GM10248 (cell line): ENCODE measurements at regions of chr3 and their contacts with region 1.

Region 1: DNA sequence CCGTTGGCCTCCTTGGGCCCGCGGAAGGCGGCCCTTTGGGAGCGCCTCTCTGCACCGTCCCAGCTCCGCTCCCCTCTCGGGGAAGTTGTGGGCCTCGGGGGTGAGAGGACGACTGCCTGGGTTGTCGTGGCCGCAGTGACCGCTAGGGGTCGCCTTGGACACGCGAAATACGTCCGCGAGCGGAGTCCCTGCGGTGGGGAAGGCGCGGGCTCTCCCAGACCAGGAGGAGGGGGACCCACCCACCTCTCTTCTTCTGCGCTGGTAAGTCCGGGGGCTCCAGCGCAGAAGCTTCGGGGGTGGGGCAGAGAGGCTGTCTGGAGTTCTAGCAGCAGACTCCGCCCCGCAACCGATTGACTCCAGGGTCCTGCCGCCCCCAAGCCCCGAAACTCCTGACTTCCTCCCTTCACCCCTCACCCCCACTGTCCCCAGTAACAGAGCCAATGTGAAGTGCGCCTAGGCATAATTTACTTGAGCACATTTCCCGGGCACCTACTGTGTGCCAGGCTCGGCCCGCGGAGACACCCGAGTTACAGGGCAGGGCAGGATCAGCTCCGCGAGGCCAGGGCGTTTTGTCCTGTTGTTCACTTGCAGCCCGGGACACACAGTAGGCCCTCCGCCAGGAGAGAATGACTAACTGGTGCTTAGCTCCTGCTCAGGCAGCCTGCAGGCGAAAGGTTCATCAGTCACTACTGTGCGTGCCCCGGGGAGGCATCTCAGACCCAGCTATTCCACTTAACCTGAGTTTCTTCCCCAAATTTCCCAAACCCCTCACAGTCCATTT is 32.8 kb downstream of the DNASE1L3 start:
- DNase-seq: peak; percentile 89
- CTCF ChIP-seq: peak; percentile 96

Region 2: DNA sequence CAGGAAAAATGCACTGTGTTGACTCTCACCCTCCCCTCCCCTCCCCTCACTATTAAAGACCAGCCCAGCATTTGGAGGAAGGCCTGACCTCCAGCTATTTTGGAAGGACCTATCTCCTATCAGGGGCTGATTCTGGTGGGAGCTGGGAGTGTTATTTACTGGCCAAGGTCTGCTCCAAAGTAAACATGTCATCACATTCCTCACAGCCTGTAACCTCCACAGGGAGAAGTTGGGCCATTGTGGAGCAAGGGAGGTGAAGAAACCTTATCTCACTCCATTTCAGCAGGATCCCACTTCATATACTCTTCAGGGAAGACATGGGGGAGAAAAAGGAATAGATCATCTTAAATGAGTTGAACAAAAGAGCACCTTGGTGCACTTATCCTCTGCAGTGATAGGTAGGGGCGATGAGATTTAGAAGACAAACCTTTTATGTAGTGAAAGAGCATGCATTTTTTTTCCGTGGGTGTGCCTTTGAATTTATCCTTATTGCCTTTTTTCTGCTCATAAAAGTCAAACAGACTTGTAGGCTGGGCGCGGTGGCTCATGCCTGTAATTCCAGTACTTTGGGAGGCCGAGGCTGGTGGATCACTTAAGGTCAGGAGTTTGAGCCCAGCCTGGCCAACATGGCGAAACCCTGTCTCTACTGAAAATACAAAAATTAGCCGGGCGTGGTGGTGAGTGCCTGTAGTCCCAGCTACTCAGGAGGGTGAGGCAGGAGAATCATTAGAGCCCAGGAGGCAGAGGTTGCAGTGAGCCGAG is 185.3 kb before region 1 on chr3:
- CTCF ChIA-PET with region 1: no interaction called
- POLR2A ChIA-PET with region 1: no interaction called
- DNase-seq: no peak
- CTCF ChIP-seq: no peak

Region 3: GRCh38 chr3:58008140-58009025 is 169.6 kb before region 1 on chr3 and contains the start of gene FLNB:
- CTCF ChIA-PET with region 1: interaction called, 67 read pairs
- POLR2A ChIA-PET with region 1: no interaction called
- DNase-seq: peak; percentile 98
- CTCF ChIP-seq: peak; percentile 97

Region 4: DNA sequence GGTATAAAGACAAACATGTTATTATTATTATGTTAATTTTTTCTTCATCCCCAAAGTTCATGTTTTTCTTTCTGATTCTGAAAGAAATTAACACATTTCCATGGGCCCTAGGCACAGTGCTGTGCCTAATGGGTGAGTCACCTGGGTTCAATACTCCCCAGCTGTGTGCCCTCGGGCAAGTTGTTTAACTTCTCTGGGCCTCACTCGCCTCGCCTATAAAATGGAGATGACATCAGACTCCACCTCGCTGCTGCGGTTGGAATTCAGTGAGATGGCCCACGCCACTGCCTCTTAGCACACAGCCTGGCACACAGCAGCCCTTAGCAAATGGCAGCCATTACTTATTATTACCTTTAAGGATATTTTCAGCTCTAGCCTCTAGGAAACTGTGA is 10.2 kb after region 1 on chr3:
- CTCF ChIA-PET with region 1: interaction called, 82 read pairs
- POLR2A ChIA-PET with region 1: no interaction called
- DNase-seq: no peak
- CTCF ChIP-seq: no peak

Region 5: GRCh38 chr3:58217209-58217811 is 39.4 kb after region 1 on chr3:
- CTCF ChIA-PET with region 1: interaction called, 20 read pairs
- POLR2A ChIA-PET with region 1: no interaction called
- DNase-seq: peak; percentile 56
- CTCF ChIP-seq: peak; percentile 69

Region 6: DNA sequence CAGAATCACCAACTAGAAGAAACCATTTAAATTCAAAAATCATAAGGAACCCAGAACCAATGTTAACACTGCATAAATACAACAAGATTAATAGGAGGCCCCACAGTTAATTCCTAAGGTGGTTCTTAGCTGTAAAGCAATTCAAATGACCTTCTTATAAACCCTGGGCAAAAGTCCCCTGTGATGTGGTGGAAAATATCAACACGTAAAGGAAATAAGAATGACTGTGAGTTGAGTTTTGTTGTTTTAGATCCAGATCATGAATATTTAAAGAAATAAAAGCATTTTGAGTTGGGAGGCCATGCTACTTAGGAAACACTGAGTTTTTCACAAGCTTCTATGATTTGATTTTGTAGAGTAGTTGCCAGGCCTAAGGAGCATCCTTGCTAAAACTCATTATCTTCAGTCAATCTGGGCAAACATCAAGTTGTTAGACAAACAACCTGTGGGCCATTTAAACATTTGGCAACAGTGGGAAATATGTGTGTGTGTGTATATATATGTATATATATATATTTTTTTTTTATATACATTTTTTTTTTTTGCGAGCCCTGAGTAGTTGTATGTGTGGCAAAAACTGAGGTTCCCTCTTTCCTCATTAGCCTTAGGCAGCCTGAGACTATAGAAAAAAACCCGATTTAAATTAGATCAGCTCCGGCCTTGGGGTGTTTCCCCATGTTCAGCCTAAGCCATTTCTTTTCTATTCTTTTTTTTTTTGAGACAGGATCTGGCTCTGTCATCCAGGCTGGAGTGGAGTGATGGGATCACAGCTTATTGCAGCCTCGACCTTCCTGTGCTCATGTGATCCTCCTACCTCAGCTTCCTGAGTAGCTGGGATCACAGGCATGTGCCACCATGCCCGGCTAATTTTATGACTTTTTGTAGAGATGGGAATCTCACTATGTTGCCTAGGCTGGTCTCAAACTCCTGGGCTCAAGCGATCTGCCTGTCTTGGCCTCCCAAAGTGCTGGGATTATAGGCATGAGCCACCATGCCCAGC is 146.8 kb after region 1 on chr3:
- CTCF ChIA-PET with region 1: interaction called, 11 read pairs
- POLR2A ChIA-PET with region 1: no interaction called
- DNase-seq: no peak
- CTCF ChIP-seq: no peak

Region 7: GRCh38 chr3:58336135-58336882 is 158.4 kb after region 1 on chr3:
- CTCF ChIA-PET with region 1: no interaction called
- POLR2A ChIA-PET with region 1: no interaction called
- DNase-seq: no peak
- CTCF ChIP-seq: no peak

Region 8: GRCh38 chr3:58792921-58793451 is 615.0 kb after region 1 on chr3:
- CTCF ChIA-PET with region 1: no interaction called
- POLR2A ChIA-PET with region 1: no interaction called
- DNase-seq: no peak
- CTCF ChIP-seq: no peak